HCT116 (cell line): ENCODE measurements at regions of chr9 and their contacts with region 1.

Region 1: DNA sequence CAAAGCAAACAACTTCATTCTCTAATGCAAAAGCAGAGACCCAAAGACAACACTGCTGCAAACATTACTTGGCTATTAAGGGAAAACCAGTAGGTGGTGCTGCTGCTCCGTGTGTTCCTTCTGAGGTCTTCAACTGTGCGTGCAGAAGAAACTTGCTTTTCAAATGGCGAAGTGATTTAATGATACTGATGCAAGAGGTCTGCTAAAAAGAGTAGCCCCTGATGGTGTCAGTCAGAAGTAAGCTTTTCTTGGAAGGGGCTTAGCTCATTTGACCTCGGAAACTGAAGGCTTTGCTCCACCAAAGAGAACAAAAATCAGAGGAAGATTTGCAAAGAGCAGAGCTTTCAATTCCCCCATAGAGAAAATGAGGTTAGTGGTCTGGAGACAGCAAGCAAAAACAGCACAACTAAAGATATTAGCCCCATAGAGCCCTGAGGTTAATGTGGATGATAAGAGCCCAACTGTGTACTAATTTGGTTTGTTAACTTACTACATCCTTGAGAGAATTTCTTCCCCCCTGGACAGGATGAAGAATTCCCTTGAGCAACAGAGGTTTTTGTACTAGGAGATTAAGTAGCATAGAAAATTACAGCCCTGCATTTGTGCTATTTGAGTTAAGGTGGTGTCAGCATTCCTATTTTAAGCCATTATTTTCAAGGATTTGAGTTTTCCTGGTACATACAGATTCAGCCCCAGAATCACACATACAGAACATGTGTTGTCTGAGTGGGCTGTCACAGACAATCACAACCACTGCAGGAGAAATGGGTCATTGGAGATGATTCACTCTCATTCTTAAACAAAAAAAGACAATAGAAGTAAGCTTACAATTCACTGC is 153.2 kb upstream of the C9orf72 start:
- DNase-seq: peak; percentile 44
- ATAC-seq: peak; percentile 74
- H3K4me3 ChIP-seq: no peak overlapping the region
- H3K27ac ChIP-seq: no peak overlapping the region
- H3K4me1 ChIP-seq: no peaks in the 10 kb centered on the region
- H3K27me3 ChIP-seq: 0 out of 2 replicates have a peak, but pooled peaks cover 3% of the 10 kb centered on the region
- CTCF ChIP-seq: peak; percentile 19 to 73 (median 70); a peak in 5 of 6 replicates
- POLR2A ChIP-seq: no peak
- RAD21 ChIP-seq: peak; percentile 69

Region 2: GRCh38 chr9:27771803-27772545 is 45.5 kb after region 1 on chr9:
- CTCF ChIA-PET with region 1: no interaction called
- POLR2A ChIA-PET with region 1: no interaction called
- RAD21 ChIA-PET with region 1: no interaction called
- intact Hi-C with region 1: loop called (anchors 5 kb)
- DNase-seq: no peak
- ATAC-seq: no peak
- H3K4me3 ChIP-seq: no peak overlapping the region
- H3K27ac ChIP-seq: no peak overlapping the region
- H3K4me1 ChIP-seq: no peaks in the 10 kb centered on the region
- H3K27me3 ChIP-seq: no peaks in the 10 kb centered on the region
- CTCF ChIP-seq: no peak
- POLR2A ChIP-seq: no peak
- RAD21 ChIP-seq: no peak

Region 3: GRCh38 chr9:27945388-27945787 is 218.9 kb after region 1 on chr9:
- CTCF ChIA-PET with region 1: no interaction called
- POLR2A ChIA-PET with region 1: no interaction called
- RAD21 ChIA-PET with region 1: no interaction called
- intact Hi-C with region 1: no loop called
- DNase-seq: no peak
- ATAC-seq: no peak
- H3K4me3 ChIP-seq: no peak overlapping the region
- H3K27ac ChIP-seq: no peak overlapping the region
- H3K4me1 ChIP-seq: no peaks in the 10 kb centered on the region
- H3K27me3 ChIP-seq: no peaks in the 10 kb centered on the region
- CTCF ChIP-seq: no peak
- POLR2A ChIP-seq: no peak
- RAD21 ChIP-seq: no peak

Region 4: GRCh38 chr9:28073270-28073669 is 346.8 kb after region 1 on chr9:
- CTCF ChIA-PET with region 1: interaction called, 8 read pairs
- POLR2A ChIA-PET with region 1: no interaction called
- RAD21 ChIA-PET with region 1: no interaction called
- intact Hi-C with region 1: loop called (anchors 1 kb)
- DNase-seq: peak; percentile 15
- ATAC-seq: no peak
- H3K4me3 ChIP-seq: no peak overlapping the region
- H3K27ac ChIP-seq: no peak overlapping the region
- H3K4me1 ChIP-seq: no peaks in the 10 kb centered on the region
- H3K27me3 ChIP-seq: no peaks in the 10 kb centered on the region
- CTCF ChIP-seq: peak in 2 of 3 experiments; percentile 11 to 39; a peak in 2 of 6 replicates
- POLR2A ChIP-seq: no peak
- RAD21 ChIP-seq: peak; percentile 31